Endothelial cell of umbilical vein (primary cell): ENCODE measurements at regions of chr2 and their contacts with region 1.

Region 1: GRCh38 chr2:169732583-169733358 is 861 bp upstream of the KLHL23 start:
- DNase-seq: no peak
- H3K4me3 ChIP-seq: peak overlapping the region in 2 of 3 experiments; percentile 45 to 63
- H3K27ac ChIP-seq: no peak overlapping the region
- H3K4me1 ChIP-seq: peaks cover 19% of the 10 kb centered on the region
- H3K27me3 ChIP-seq: peaks cover 0 to 1% of the 10 kb centered on the region in 2 experiments
- CTCF ChIP-seq: no peak
- POLR2A ChIP-seq: no peak

Region 2: DNA sequence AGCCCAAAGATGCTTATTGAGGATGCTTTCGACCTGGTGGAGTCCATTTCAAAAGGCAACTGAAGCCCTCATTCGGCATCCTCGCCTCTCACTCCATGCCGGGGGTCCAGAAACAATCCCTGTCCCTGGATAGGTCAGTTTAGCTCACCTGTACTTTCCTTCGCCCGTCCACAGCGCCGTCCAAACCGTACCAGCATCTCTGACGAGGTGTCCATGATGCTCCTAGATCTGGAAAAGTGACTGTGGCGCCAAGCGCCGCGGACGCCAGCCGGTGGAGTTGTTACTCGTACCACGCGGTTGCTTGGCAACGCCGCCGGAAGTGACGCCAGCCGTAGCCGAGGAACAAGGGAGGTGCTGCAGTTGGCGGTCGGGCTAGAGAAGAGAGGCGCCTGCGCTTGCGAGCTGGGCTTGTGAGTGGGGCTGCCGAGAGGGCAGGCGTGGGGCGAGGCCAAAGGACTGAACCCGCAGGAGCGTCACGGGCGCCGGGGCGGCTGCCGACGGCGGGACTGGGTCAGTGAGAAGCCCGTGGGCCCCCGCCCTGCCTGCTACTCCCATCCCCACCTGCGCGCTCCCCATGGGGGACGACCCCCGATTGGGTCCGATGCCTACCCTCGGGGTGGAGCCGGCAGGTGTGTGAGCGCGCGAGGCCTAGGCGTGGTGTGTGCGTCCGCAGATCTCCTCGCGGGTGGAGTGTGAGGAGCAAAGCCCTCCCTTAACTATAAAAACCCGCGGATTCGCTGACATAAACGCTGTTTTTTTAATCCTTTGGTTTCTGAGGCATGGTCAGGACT is 38.5 kb before region 1 on chr2 and contains the starts of genes CFAP210 and PHOSPHO2:
- CTCF ChIA-PET with region 1: no interaction called
- POLR2A ChIA-PET with region 1: no interaction called
- dilution Hi-C with region 1: no loop called
- intact Hi-C with region 1: loop called (anchors 2 kb)
- DNase-seq: peak; percentile 96
- H3K4me3 ChIP-seq: peak within 1 kb of the TSS; percentile 21 to 87 (median 85)
- H3K27ac ChIP-seq: peak within 1 kb of the TSS; percentile 64
- H3K4me1 ChIP-seq: peaks cover 8% of the 10 kb centered on the region
- H3K27me3 ChIP-seq: peaks cover 11 to 25% of the 10 kb centered on the region in 2 experiments
- CTCF ChIP-seq: no peak
- POLR2A ChIP-seq: peak; percentile 80
- total RNA-seq, gene CFAP210: not detected in 2 replicates
- total RNA-seq, gene PHOSPHO2: 2.7 TPM in 2 replicates

Region 3: DNA sequence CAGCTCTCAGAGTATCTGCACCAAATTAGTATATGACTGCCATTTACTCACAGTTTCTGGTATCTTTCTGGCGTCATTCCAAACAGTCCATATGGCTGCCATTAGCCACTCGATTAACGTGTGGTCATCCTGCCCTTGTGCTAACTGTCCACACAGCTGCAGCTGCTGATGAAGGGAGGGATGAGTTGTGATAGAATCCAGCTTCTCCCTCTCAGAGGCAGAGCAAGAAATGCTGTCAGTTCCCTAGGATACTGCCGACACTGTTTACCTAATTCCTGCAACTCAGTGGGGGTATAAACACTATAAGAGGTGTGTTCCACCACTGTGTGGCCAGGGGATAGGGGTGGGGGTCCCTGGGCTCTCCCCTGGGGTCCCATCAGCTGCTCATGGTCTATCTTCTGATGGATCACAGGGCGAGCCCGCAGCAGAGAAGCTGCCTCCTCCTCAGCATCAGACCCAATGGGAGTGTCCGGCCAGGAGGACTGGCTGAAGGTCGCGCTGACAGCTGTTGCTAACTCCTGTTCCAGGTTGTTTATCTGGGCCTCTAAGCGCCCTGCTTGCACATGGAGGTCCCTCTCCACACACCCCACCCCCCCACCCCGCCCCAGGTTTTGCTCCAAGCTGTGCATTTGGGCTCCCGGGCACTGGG is 16.4 kb before region 1 on chr2:
- CTCF ChIA-PET with region 1: no interaction called
- POLR2A ChIA-PET with region 1: no interaction called
- dilution Hi-C with region 1: no loop called
- intact Hi-C with region 1: loop called (anchors 1 kb)
- DNase-seq: peak; percentile 26
- H3K4me3 ChIP-seq: no peak overlapping the region
- H3K27ac ChIP-seq: no peak overlapping the region
- H3K4me1 ChIP-seq: peaks cover 22% of the 10 kb centered on the region
- H3K27me3 ChIP-seq: no peaks in the 10 kb centered on the region
- CTCF ChIP-seq: no peak
- POLR2A ChIP-seq: no peak